MCF 10A (cell line): ENCODE measurements at regions of chr19 and their contacts with region 1.

Region 1: GRCh38 chr19:54023191-54023590 is 31.8 kb downstream of the CACNG6 start:
- DNase-seq: no peak
- H3K4me3 Mint-ChIP-seq: no peak overlapping the region
- H3K27ac Mint-ChIP-seq: no peak overlapping the region
- H3K4me1 Mint-ChIP-seq: peaks cover 10% of the 10 kb centered on the region
- H3K27me3 Mint-ChIP-seq: no peaks in the 10 kb centered on the region
- CTCF ChIP-seq: no peak

Region 2: GRCh38 chr19:53808710-53809125 is 214.5 kb before region 1 on chr19:
- CTCF ChIA-PET with region 1: interaction called, 89 read pairs
- POLR2A ChIA-PET with region 1: no interaction called
- intact Hi-C with region 1: loop called (anchors 5 kb)
- DNase-seq: peak; percentile 41
- H3K4me3 Mint-ChIP-seq: no peak overlapping the region
- H3K27ac Mint-ChIP-seq: no peak overlapping the region
- H3K4me1 Mint-ChIP-seq: no peaks in the 10 kb centered on the region
- H3K27me3 Mint-ChIP-seq: no peaks in the 10 kb centered on the region
- CTCF ChIP-seq: peak; percentile 24

Region 3: GRCh38 chr19:53824134-53824611 is 199.0 kb before region 1 on chr19 and contains the start of gene NLRP12:
- CTCF ChIA-PET with region 1: interaction called, 11 read pairs
- POLR2A ChIA-PET with region 1: no interaction called
- intact Hi-C with region 1: no loop called
- DNase-seq: no peak
- H3K4me3 Mint-ChIP-seq: no peak within 1 kb of the TSS
- H3K27ac Mint-ChIP-seq: no peak within 1 kb of the TSS
- H3K4me1 Mint-ChIP-seq: no peaks in the 10 kb centered on the region
- H3K27me3 Mint-ChIP-seq: no peaks in the 10 kb centered on the region
- CTCF ChIP-seq: no peak
- total RNA-seq, gene NLRP12: not detected in 2 replicates

Region 4: DNA sequence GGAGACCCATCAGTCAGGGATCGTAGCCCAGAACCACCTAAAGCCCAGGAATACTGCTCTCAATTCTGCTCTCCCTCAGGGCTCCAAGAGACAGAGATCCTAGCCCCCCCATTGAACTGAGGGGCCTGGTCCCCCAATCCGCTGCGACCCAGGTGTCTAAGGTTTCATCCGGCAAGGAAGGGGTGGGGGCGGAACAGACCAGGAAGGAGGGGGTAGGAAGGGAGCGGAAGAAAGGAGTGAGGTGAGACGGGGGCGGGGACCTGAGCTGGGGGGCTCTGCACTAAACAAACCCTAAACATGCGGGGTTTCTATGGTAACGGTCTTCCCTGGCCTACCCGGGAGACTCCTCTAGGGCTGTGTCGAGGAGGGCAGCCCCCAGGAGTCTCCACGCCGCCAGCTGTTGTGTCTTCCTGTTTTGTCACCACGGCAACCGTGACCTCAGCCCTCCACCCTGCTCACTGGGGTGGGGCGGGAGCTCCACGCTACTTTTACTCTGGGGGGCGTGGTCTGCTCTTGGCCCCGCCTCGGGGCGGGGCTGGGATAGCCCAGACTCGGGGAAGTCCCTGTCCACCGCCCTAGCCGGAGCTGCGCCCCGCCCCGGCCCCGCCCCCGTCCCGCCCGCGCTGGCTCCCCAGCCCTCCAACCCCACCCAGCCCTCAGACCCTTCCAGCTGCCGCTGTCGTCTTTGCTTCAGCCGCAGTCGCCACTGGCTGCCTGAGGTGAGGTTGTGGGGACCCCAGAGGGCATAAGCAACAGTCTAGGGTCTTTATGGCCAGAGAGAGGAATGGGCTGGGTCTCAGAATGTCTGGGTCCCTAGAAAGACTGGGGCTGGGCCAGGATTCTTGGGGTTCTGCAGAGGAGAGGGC is 155.7 kb before region 1 on chr19 and contains the start of gene MYADM:
- CTCF ChIA-PET with region 1: interaction called, 10 read pairs
- POLR2A ChIA-PET with region 1: interaction called, 4 read pairs
- intact Hi-C with region 1: no loop called
- DNase-seq: peak; percentile 97
- H3K4me3 Mint-ChIP-seq: peak within 1 kb of the TSS; percentile 97
- H3K27ac Mint-ChIP-seq: peak within 1 kb of the TSS; percentile 100
- H3K4me1 Mint-ChIP-seq: peaks cover 20% of the 10 kb centered on the region
- H3K27me3 Mint-ChIP-seq: no peaks in the 10 kb centered on the region
- CTCF ChIP-seq: no peak
- total RNA-seq, gene MYADM: 39.0 and 43.3 TPM in 2 replicates

Region 5: GRCh38 chr19:54011507-54012211 is 11.5 kb before region 1 on chr19:
- CTCF ChIA-PET with region 1: interaction called, 26 read pairs
- POLR2A ChIA-PET with region 1: no interaction called
- intact Hi-C with region 1: no loop called
- DNase-seq: no peak
- H3K4me3 Mint-ChIP-seq: no peak overlapping the region
- H3K27ac Mint-ChIP-seq: no peak overlapping the region
- H3K4me1 Mint-ChIP-seq: peaks cover 13% of the 10 kb centered on the region
- H3K27me3 Mint-ChIP-seq: no peaks in the 10 kb centered on the region
- CTCF ChIP-seq: no peak

Region 6: GRCh38 chr19:54041969-54042606 is 18.9 kb after region 1 on chr19:
- CTCF ChIA-PET with region 1: interaction called, 18 read pairs
- POLR2A ChIA-PET with region 1: no interaction called
- intact Hi-C with region 1: no loop called
- DNase-seq: no peak
- H3K4me3 Mint-ChIP-seq: no peak overlapping the region
- H3K27ac Mint-ChIP-seq: no peak overlapping the region
- H3K4me1 Mint-ChIP-seq: no peaks in the 10 kb centered on the region
- H3K27me3 Mint-ChIP-seq: peaks cover 24% of the 10 kb centered on the region
- CTCF ChIP-seq: no peak